ENCODE measurements at regions of chr6 and their contacts with region 1.

Region 1: DNA sequence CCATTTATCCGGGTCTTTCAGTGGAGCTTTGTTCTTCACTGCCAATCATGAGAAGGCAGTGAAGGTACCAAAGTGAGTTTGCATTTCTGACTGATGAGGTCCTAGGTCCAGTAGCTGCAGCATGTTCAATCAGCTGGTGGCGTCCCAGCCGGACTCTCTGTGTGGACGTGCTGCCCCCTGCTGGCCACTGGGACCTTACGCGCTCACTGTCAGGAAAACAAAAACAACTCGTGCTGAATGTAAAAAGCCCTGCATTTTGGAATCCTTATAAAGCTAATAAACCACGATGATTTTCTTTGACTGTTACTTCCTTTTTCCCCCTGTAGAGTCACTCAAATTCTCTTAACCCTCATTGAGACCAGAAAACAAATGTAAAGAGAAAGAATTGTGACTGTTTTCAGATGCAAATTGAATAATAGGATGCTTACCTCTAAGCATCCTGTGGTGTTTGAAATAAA is 4.9 kb upstream of the CD24 start:
- DNase-seq: peak; percentile 24
- ATAC-seq: peak; percentile 84
- H3K4me3 ChIP-seq: no peak overlapping the region
- H3K27ac ChIP-seq: no peak overlapping the region
- H3K4me1 ChIP-seq: no peaks in the 10 kb centered on the region
- H3K27me3 ChIP-seq: no peaks in the 10 kb centered on the region; a peak in 1 of 4 replicates
- CTCF ChIP-seq: peak; percentile 93 to 95 (median 95)
- EP300 ChIP-seq: no peak
- POLR2A ChIP-seq: no peak
- RAD21 ChIP-seq: peak; percentile 99

Region 2: GRCh38 chr6:106339334-106340029 is 640.0 kb before region 1 on chr6:
- CTCF ChIA-PET with region 1: interaction called, 15 read pairs
- POLR2A ChIA-PET with region 1: no interaction called
- RAD21 ChIA-PET with region 1: interaction called, 10 read pairs
- SMC1A ChIA-PET with region 1: interaction called, 5 read pairs
- in situ Hi-C with region 1: loop called (anchors 10 kb)
- intact Hi-C with region 1: loop called (anchors 1 kb)
- DNase-seq: no peak
- ATAC-seq: peak; percentile 94
- H3K4me3 ChIP-seq: no peak overlapping the region
- H3K27ac ChIP-seq: no peak overlapping the region
- H3K4me1 ChIP-seq: no peaks in the 10 kb centered on the region
- H3K27me3 ChIP-seq: no peaks in the 10 kb centered on the region
- CTCF ChIP-seq: peak; percentile 68 to 77 (median 73)
- EP300 ChIP-seq: no peak
- POLR2A ChIP-seq: no peak
- RAD21 ChIP-seq: peak; percentile 57

Region 3: DNA sequence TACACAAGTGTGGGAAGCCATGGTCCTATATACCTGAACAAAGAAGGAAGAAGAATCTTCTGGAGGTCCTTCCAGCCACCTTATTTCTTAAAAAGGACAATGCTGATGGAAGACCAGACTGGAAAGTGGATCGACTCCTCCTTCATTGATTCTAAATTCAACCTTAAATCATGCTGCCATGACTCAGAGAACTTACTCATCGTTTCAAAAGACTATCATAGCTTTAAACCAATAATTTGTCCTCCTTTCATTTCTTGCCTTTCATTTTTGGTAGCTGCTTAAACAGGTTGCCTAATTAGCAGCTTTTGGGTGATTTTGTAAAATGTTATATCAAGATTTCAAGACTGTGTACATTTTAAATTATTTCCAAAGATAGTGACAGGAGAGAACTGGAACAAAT is 410.9 kb before region 1 on chr6:
- CTCF ChIA-PET with region 1: interaction called, 19 read pairs
- POLR2A ChIA-PET with region 1: no interaction called
- RAD21 ChIA-PET with region 1: interaction called, 8 read pairs
- SMC1A ChIA-PET with region 1: interaction called, 10 read pairs
- in situ Hi-C with region 1: no loop called
- intact Hi-C with region 1: loop called (anchors 2 kb)
- DNase-seq: no peak
- ATAC-seq: no peak
- H3K4me3 ChIP-seq: no peak overlapping the region
- H3K27ac ChIP-seq: no peak overlapping the region
- H3K4me1 ChIP-seq: no peaks in the 10 kb centered on the region
- H3K27me3 ChIP-seq: no peaks in the 10 kb centered on the region
- CTCF ChIP-seq: no peak
- EP300 ChIP-seq: no peak
- POLR2A ChIP-seq: no peak
- RAD21 ChIP-seq: no peak

Region 4: GRCh38 chr6:106614592-106615301 is 364.7 kb before region 1 on chr6:
- CTCF ChIA-PET with region 1: interaction called, 85 read pairs
- POLR2A ChIA-PET with region 1: no interaction called
- RAD21 ChIA-PET with region 1: interaction called, 20 read pairs
- SMC1A ChIA-PET with region 1: interaction called, 35 read pairs
- in situ Hi-C with region 1: loop called (anchors 5 kb)
- intact Hi-C with region 1: no loop called
- DNase-seq: no peak
- ATAC-seq: no peak
- H3K4me3 ChIP-seq: no peak overlapping the region
- H3K27ac ChIP-seq: no peak overlapping the region
- H3K4me1 ChIP-seq: peaks cover 4% of the 10 kb centered on the region; the same call in 1 of the 2 replicates
- H3K27me3 ChIP-seq: no peaks in the 10 kb centered on the region
- CTCF ChIP-seq: no peak
- EP300 ChIP-seq: no peak
- POLR2A ChIP-seq: no peak
- RAD21 ChIP-seq: no peak

Region 5: DNA sequence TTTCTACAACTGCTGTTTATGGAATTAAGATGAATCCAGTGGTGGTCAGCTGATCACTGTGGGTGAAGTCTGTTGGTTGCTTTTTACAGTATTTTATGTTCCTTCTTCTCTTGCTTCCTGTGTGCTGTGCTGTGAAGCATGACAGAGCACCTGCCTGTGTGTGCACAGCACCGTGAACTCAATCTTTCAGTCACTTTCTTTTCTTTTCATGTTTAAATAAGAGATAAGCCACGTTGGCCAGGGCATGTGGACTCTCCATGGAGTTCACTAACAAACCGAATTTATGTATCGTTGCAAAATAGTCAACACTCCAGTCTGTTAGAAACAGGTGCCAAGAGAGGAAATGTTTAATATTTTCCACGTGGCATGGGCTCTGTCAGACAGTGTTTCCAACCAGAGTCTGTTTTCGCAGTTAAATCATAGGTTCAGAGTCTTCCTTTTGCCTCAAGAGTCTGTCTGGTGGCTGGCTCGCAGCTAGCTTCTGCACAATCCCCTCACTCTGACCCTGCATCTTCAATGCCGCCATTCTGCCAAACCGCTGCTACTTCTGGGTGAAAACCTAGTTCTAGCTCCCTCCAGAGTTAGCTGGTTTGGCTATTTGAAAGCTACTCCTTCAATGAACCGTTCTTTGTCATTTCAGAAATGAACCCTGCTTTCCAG is 276.9 kb before region 1 on chr6:
- CTCF ChIA-PET with region 1: interaction called, 7 read pairs
- POLR2A ChIA-PET with region 1: no interaction called
- RAD21 ChIA-PET with region 1: interaction called, 3 read pairs
- SMC1A ChIA-PET with region 1: no interaction called
- in situ Hi-C with region 1: no loop called
- intact Hi-C with region 1: loop called (anchors 5 kb)
- DNase-seq: peak; percentile 86
- ATAC-seq: peak; percentile 99
- H3K4me3 ChIP-seq: peak overlapping the region; percentile 23; the same call in 1 of the 2 replicates
- H3K27ac ChIP-seq: peak overlapping the region; percentile 93
- H3K4me1 ChIP-seq: peaks cover 17% of the 10 kb centered on the region
- H3K27me3 ChIP-seq: no peaks in the 10 kb centered on the region
- CTCF ChIP-seq: no peak
- EP300 ChIP-seq: peak in 1 of 2 experiments; percentile 77; a peak in 2 of 4 replicates
- POLR2A ChIP-seq: no peak
- RAD21 ChIP-seq: peak; percentile 9; the same call in 1 of the 2 replicates

Region 6: DNA sequence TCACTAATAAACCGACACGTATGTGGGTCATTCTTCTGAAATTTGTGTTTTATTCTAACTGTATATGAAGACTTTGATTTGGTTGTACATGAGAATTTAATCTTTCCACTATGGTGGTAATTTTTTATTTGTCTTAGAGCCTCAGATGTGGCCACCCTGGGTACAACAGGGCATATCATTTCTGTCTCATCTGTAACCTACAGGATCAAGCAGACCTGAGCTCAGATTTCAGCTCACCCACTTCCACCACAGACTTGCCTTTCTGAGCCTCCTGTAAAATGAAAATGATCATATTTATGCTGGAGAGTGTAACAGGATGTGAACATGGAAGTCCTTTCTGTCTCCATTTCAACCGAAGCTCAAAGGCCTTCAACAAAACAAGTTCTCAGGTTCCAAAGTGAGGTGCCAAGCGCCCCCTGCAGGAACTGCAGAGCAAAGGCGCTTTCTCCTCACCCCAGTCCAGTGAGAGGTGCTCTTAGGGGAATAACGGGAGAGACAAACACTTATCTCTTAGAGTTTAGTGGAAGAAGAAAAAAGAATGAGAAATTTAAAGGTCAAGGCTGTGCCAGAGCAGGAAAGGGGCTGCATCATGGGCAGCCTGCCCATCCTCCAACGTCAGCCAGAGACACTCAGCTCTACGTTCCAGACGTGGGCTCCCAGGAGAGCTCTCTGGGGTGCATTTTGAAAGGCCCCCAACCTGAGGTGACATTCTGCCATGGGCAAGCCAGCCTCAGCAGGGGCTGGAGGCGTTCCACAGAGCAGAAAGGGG is 18.1 kb after region 1 on chr6:
- CTCF ChIA-PET with region 1: interaction called, 29 read pairs
- POLR2A ChIA-PET with region 1: no interaction called
- RAD21 ChIA-PET with region 1: interaction called, 5 read pairs
- SMC1A ChIA-PET with region 1: interaction called, 4 read pairs
- in situ Hi-C with region 1: no loop called
- intact Hi-C with region 1: no loop called
- DNase-seq: peak; percentile 12
- ATAC-seq: peak; percentile 91
- H3K4me3 ChIP-seq: no peak overlapping the region
- H3K27ac ChIP-seq: no peak overlapping the region
- H3K4me1 ChIP-seq: no peaks in the 10 kb centered on the region
- H3K27me3 ChIP-seq: no peaks in the 10 kb centered on the region
- CTCF ChIP-seq: peak; percentile 81 to 96 (median 91)
- EP300 ChIP-seq: no peak
- POLR2A ChIP-seq: no peak
- RAD21 ChIP-seq: peak; percentile 74

Region 7: GRCh38 chr6:107396211-107396610 is 416.8 kb after region 1 on chr6:
- CTCF ChIA-PET with region 1: no interaction called
- POLR2A ChIA-PET with region 1: no interaction called
- RAD21 ChIA-PET with region 1: no interaction called
- SMC1A ChIA-PET with region 1: no interaction called
- in situ Hi-C with region 1: no loop called
- intact Hi-C with region 1: no loop called
- DNase-seq: no peak
- ATAC-seq: no peak
- H3K4me3 ChIP-seq: no peak overlapping the region
- H3K27ac ChIP-seq: no peak overlapping the region
- H3K4me1 ChIP-seq: no peaks in the 10 kb centered on the region
- H3K27me3 ChIP-seq: no peaks in the 10 kb centered on the region
- CTCF ChIP-seq: no peak
- EP300 ChIP-seq: no peak
- POLR2A ChIP-seq: no peak
- RAD21 ChIP-seq: no peak

Measured in GM12878 (cell line).